Left cardiac atrium (tissue), 4 donors: ENCODE measurements at regions of chr11 and their contacts with region 1.

Region 1: DNA sequence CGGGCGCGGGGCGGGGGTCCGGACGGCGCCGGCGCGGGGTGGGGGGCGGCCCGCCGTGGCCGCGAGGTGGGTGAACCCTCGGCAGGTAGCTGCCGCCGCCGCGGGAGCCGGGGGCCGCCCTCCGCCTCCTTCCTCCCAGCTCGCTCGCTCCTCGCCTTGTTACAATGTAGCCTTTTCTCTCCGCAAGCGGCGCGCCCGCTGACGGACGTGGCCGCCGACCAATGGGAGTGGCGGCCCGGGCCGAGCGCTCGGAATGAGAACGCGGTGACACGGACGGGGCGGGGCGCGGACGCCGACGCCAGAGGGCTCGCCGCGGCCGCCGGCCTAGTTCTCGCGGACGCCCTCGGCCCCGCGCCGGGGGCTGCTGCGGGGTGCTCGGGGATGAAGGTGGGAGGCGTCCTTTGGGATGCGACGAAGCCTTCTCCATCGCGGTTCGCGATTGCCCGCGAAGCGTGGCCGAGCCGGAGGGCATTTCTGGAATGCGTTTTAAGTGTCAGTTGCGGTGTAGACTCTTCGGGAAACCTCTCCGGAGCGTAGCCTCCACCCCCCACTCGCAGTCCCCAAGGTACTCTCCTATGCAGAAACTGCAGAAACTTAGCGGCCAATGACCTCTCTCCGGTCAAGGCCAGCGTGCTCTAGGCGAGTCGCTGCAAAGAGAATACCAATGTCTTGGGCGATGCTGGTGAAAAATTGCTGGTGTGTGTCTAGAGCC is 734 bp downstream of the PRDM11 start:
- DNase-seq: peak; percentile 96
- ATAC-seq: peak; percentile 97 to 99

Region 2: GRCh38 chr11:45180179-45180842 is 33.1 kb after region 1 on chr11:
- intact Hi-C with region 1: loop called in 1 of 2 experiments (anchors 2 kb)
- DNase-seq: peak; percentile 61
- ATAC-seq: peak; percentile 79 to 86

Region 3: GRCh38 chr11:45313171-45313865 is 166.1 kb after region 1 on chr11:
- intact Hi-C with region 1: no loop called
- DNase-seq: no peak
- ATAC-seq: peak in 1 of 2 donors; percentile 76

Region 4: GRCh38 chr11:45339729-45340519 is 192.8 kb after region 1 on chr11:
- intact Hi-C with region 1: no loop called
- DNase-seq: peak; percentile 95
- ATAC-seq: peak; percentile 97